Endothelial cell of umbilical vein (primary cell): ENCODE measurements at regions of chr18 and their contacts with region 1.

Region 1: GRCh38 chr18:2536493-2536892 is 34.8 kb downstream of the METTL4 start:
- DNase-seq: no peak
- H3K4me3 ChIP-seq: no peak overlapping the region
- H3K27ac ChIP-seq: no peak overlapping the region
- H3K4me1 ChIP-seq: no peaks in the 10 kb centered on the region
- H3K27me3 ChIP-seq: no peaks in the 10 kb centered on the region
- CTCF ChIP-seq: no peak
- POLR2A ChIP-seq: no peak

Region 2: GRCh38 chr18:2104620-2105462 is 431.7 kb before region 1 on chr18:
- CTCF ChIA-PET with region 1: interaction called, 259 read pairs
- POLR2A ChIA-PET with region 1: no interaction called
- dilution Hi-C with region 1: no loop called
- intact Hi-C with region 1: no loop called
- DNase-seq: peak; percentile 58
- H3K4me3 ChIP-seq: no peak overlapping the region
- H3K27ac ChIP-seq: no peak overlapping the region
- H3K4me1 ChIP-seq: no peaks in the 10 kb centered on the region
- H3K27me3 ChIP-seq: peaks cover 0 to 2% of the 10 kb centered on the region in 2 experiments
- CTCF ChIP-seq: peak; percentile 75 to 87
- POLR2A ChIP-seq: no peak

Region 3: DNA sequence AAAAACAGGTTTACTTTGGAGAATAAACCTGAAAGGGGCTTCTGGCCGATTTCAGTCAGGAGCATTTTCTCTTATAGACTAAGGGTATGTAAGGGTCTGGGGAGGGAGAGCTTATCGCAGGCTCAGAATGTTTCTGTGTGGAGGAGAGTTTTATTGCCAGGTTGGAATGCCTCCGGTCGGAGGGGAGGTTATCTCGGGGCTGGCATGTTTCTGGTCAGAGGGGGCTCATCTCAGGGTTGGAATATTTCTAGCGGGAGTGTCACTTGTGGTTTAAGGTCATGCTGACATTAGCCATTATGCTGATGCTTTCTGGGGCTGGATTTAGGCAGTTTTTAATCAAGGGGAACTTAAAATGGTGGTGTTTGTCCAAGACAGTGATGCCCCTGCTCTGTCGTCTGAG is 298.8 kb before region 1 on chr18:
- CTCF ChIA-PET with region 1: no interaction called
- POLR2A ChIA-PET with region 1: no interaction called
- dilution Hi-C with region 1: no loop called
- intact Hi-C with region 1: loop called (anchors 5 kb)
- DNase-seq: no peak
- H3K4me3 ChIP-seq: no peak overlapping the region
- H3K27ac ChIP-seq: no peak overlapping the region
- H3K4me1 ChIP-seq: no peaks in the 10 kb centered on the region
- H3K27me3 ChIP-seq: peaks cover 15 to 34% of the 10 kb centered on the region in 2 experiments
- CTCF ChIP-seq: no peak
- POLR2A ChIP-seq: no peak

Region 4: DNA sequence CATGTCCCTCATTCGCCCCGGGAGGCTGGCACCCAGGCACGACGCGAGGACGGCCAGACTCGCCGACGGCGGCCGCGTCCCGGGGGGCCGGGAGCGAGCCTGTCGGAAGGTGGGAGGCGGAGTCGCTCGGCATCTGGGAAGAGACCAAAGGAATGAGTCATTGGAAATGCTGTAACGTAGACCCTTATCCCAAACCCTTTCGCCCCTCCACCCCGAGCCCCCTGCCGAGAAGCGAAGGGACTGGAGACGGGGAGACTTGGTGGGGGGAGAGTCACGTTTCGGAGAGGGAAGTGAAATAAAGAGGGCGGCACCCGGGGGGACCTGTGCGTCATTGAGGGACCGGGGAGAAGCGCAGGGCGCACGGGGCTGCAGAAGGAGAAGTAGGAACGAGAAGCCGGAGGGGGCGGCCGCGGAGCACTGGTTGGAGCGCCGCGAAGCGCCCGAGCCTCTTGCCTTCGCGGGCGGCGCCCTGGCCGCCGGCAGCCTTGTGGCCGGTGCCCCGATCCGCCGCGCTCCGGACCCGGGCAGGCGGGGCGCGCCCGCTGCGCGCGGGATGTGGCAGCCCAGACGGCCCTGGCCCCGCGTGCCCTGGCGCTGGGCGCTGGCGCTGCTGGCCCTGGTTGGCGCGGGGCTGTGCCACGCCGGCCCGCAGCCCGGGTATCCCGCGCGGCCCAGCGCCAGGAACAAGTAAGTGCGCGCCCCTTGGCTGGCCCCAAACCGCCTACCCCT is 310.3 kb after region 1 on chr18 and contains the start of gene EMILIN2:
- CTCF ChIA-PET with region 1: no interaction called
- POLR2A ChIA-PET with region 1: no interaction called
- dilution Hi-C with region 1: no loop called
- intact Hi-C with region 1: no loop called
- DNase-seq: peak; percentile 18
- H3K4me3 ChIP-seq: peak within 1 kb of the TSS; percentile 22 to 34 (median 30)
- H3K27ac ChIP-seq: no peak within 1 kb of the TSS
- H3K4me1 ChIP-seq: peaks cover 19% of the 10 kb centered on the region
- H3K27me3 ChIP-seq: peaks cover 37 to 71% of the 10 kb centered on the region in 2 experiments
- CTCF ChIP-seq: no peak
- POLR2A ChIP-seq: no peak
- total RNA-seq, gene EMILIN2: 11.3 and 13.4 TPM in 2 replicates